Spleen (tissue), 13 donors: ENCODE measurements at regions of chr6 and their contacts with region 1.

Region 1: GRCh38 chr6:25070547-25071366 is 135.0 kb upstream of the RIPOR2 start:
- DNase-seq: peak; percentile 90
- H3K4me3 ChIP-seq: peak overlapping the region in 1 of 8 donors; percentile 55
- H3K27ac ChIP-seq: peak overlapping the region; percentile 61 to 81 (median 74)
- H3K4me1 ChIP-seq: peaks cover 0 to 8% (median 5%) of the 10 kb centered on the region in 6 donors
- H3K27me3 ChIP-seq: no peaks in the 10 kb centered on the region
- CTCF ChIP-seq: peak; percentile 88 to 97 (median 94)
- POLR2A ChIP-seq: no peak

Region 2: DNA sequence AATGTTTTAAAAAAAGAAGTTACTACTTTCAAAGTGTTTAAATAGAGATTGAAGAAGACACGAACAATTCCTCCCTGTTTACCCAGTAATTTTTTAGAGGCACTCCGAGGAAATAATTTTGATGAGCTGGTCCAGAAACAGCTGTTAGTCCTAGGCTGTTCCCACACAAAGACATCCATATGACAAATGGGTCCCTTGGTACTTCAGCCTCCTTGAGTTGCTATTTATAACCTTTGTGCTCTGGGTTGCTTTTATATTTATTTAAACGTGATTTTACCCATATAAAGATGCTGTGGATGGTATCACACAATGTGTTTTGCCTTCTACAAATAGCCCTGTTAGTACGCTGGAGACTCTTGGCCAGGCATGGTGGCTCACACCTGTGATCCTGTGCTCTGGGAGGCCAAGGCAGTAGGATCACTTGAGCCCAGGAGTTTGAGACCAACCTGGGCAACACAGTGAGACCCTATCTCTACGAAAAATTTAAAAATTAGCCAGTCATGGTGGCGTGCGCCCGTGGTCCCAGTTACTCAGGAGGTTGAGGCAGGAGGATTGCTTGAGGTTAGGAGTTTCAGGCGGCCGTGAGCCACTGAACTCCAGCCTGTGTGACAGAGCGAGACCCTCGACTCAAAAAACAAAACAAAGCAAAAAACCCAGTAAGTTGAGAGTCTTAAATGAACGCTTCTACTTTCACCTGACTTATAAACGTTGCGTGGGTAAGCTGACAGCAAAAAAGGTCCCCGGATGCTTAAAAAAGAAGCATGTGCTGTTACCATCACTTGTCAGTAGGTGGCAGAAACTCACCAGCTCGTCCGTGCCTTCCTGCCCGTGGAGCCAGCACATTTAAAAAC is 215.1 kb before region 1 on chr6:
- intact Hi-C with region 1: loop called (anchors 10 kb)
- DNase-seq: peak; percentile 85
- H3K4me3 ChIP-seq: peak overlapping the region in 1 of 8 donors; percentile 5
- H3K27ac ChIP-seq: peak overlapping the region in 7 of 8 donors; percentile 4 to 93 (median 88)
- H3K4me1 ChIP-seq: peaks cover 42 to 67% (median 52%) of the 10 kb centered on the region in 6 donors
- H3K27me3 ChIP-seq: no peaks in the 10 kb centered on the region
- CTCF ChIP-seq: peak; percentile 66 to 93 (median 85)
- POLR2A ChIP-seq: no peak

Region 3: DNA sequence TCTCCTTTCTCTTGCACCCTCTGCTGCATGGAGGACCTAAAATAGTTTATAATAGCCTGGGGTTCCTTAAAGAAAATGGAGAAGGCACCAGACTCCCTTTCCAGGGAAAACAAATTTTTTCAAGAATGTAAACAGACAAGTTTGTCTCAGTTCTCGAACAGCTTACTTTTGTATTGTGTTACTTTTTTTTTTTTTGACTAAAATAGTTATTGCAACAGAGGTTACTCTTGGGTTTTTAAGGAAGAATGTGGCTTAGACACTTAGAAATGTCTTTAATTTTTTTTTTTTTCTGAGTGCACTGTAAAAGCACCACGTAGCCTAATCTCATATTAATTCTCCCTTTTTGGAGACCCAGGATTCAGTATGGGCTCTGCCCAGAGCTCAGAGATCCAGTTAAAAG is 59.8 kb after region 1 on chr6:
- intact Hi-C with region 1: no loop called
- DNase-seq: no peak
- H3K4me3 ChIP-seq: peak overlapping the region in 1 of 8 donors; percentile 34
- H3K27ac ChIP-seq: peak overlapping the region in 7 of 8 donors; percentile 9 to 97 (median 52)
- H3K4me1 ChIP-seq: peaks cover under 1 to 92% (median 25%) of the 10 kb centered on the region in 6 donors
- H3K27me3 ChIP-seq: no peaks in the 10 kb centered on the region
- CTCF ChIP-seq: no peak
- POLR2A ChIP-seq: no peak